GM10248 (cell line): ENCODE measurements at regions of chr15 and their contacts with region 1.

Region 1: DNA sequence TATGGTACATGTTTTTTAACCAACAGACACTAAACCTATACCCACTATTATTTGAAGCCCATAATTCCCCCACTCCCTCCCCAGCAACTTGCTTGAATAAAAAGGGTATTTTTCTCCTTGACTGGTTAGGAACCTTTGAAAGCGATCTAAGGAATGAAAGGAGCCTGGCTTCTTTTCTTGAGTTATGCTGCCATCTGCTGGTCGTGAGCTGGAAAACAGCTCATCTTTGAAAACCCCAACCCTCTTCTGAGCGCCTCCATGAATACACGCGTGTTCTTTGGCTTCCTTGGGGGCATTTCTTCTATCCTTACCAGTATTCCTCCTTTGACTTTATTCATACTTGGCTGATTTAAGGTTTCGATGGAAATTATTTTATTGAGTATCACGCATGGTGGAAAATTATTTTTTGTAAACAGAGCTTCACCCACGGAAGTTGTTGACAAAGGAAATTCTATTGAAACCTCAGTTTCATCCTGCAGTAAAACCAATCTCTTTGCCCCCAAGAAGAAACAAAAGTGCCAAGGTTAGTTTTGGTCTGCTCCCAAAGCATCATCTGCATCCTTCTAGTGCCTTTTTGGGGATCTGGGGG is 171.6 kb downstream of the SV2B start:
- DNase-seq: peak; percentile 54
- CTCF ChIP-seq: peak; percentile 84

Region 2: DNA sequence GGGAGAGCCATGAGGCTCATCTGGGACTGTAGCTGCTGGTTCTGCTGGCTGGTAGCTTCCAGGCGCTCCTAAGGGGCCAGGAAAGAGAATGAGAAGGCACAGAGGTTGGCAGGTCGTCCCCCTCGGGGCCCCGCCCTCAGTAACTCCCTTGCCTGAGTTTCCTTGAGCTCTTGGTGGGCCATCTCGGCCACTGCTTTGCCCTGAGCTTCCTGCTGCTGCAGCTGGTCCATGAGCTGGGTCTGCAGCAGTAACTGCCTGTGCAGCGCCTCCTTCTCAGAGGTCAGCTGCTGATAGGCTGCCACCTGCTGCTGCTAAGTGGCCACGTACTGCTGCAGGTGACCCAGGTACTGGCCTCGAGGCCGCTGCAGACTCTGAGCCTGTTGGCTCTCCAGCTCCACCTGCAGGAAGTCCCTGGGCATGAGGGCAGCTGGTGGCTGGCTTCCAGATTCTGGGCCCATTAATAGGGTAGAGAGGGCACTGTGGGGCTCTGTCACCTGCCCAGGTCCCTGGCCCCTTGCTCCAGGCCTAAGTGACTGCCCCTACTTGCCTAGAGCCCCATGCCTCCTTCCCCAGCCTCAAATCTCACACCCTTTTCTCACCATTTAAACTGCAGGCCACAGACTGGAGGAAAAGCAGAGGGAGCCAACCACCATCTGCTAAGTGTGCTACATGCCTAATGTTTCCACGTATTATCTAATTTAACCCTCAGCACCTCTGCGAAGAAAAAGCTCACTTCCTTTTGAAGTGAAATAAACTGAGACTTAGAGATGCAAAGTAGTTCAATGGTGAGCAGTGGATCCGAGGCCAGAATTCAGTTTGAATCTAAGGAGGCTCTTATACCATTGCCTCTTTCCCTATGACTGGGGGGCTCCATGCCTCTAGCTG is 238.5 kb before region 1 on chr15:
- CTCF ChIA-PET with region 1: interaction called, 15 read pairs
- POLR2A ChIA-PET with region 1: no interaction called
- DNase-seq: peak; percentile 59
- CTCF ChIP-seq: peak; percentile 86

Region 3: DNA sequence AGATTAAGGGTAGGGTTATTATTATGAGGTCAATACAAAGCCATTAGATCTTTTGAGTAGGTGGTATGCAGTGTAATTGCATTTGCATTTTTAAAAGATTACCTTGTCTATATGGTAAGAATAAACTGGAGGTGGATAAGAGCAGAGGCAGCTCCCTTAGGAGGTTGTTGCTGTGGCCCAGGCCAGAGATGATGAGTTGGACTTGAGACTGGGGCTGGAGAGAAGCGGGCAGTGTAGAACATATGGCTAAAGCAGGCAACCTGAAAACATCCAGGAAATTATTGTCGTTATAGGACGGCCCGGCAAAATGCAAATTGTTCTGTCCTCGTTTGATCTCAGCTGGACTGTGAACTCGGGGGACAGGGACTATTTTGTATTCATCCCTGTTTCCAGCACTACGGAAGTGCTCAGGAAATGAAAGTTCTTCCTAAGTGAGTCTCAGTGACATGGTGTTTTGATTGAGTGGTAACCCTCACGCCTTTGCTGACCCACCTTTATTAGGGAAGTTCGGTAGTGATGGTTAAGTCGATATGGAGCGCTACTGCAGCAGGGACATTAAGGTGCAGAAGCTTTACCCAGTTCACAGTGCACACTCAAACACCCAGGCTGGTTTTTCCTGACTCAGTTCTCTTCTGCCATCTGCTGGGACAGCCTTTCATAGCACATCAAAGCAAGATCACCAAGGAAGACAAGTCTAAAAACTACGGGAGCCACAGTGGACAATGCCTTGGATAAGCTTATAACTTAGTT is 222.1 kb before region 1 on chr15:
- CTCF ChIA-PET with region 1: interaction called, 93 read pairs
- POLR2A ChIA-PET with region 1: no interaction called
- DNase-seq: peak; percentile 54
- CTCF ChIP-seq: peak; percentile 76

Region 4: GRCh38 chr15:91258425-91258779 is 13.3 kb before region 1 on chr15:
- CTCF ChIA-PET with region 1: interaction called, 72 read pairs
- POLR2A ChIA-PET with region 1: no interaction called
- DNase-seq: no peak
- CTCF ChIP-seq: no peak

Region 5: GRCh38 chr15:91302588-91303439 is 31.2 kb after region 1 on chr15:
- CTCF ChIA-PET with region 1: interaction called, 15 read pairs
- POLR2A ChIA-PET with region 1: no interaction called
- DNase-seq: peak; percentile 69
- CTCF ChIP-seq: peak; percentile 74